ENCODE measurements at regions of chr11 and their contacts with region 1.

Region 1: DNA sequence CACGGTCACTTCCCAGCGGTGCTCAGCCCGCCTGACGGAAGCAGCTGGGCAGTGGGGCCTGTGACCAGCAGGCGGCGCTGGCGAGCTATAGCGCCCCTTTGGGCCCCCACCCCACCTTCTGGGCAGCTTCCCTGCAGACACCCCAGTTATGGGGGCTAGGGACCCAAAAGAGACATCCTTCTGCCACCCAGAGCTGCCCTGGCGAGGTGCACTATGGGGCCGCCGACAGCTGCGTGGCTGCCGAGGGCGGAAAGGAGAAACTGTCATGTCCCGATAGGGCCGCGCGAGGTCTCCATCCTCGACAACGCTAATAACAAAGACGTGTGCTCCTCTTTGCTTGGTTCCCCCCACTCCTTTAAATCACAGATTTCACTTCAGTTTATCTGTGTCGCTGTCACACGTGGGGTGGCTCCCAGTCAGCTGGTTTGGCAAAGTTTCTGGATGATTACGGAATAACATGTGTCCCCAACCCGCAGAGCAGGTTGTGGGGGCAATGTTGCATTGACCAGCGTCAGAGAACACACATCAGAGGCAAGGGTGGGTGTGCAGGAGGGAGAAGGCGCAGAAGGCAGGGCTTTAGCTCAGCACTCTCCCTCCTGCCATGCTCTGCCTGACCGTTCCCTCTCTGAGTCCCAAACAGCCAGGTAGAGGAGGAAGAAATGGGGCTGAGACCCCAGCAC is 674 bp upstream of the MYO7A start:
- DNase-seq: peak; percentile 74
- ATAC-seq: peak; percentile 83
- H3K4me3 Mint-ChIP-seq: peak overlapping the region; percentile 37
- H3K27ac Mint-ChIP-seq: no peak overlapping the region
- H3K4me1 Mint-ChIP-seq: peaks cover 5% of the 10 kb centered on the region
- H3K27me3 Mint-ChIP-seq: peaks cover 4% of the 10 kb centered on the region
- CTCF ChIP-seq: peak; percentile 100

Region 2: DNA sequence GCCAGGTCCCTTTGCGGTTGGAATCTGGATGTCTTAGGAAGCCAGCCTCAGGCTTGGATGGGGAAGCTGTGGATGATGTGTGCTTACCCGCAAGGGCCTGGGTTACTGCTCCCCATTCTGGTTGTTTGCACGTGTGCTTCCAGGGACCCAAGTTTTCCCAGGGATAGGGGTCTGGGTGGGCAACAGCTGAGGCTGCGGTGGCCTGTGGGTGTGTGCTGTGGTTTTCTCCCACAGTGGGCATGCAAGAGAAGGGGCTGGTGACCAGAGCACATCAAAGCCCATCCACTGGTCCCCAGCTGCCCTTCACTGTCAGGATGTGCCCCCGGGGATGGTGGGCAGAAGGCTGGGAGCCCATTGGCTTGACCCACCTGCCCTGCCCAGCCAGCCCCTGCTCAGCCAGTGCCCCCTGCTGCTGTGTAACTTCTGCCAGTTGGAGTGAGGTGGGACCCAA is 57.3 kb before region 1 on chr11:
- CTCF ChIA-PET with region 1: no interaction called
- POLR2A ChIA-PET with region 1: no interaction called
- intact Hi-C with region 1: no loop called
- DNase-seq: no peak
- ATAC-seq: no peak
- H3K4me3 Mint-ChIP-seq: no peak overlapping the region
- H3K27ac Mint-ChIP-seq: no peak overlapping the region
- H3K4me1 Mint-ChIP-seq: peaks cover 36% of the 10 kb centered on the region
- H3K27me3 Mint-ChIP-seq: no peaks in the 10 kb centered on the region
- CTCF ChIP-seq: no peak

Region 3: GRCh38 chr11:77113382-77114088 is 13.8 kb before region 1 on chr11:
- CTCF ChIA-PET with region 1: interaction called, 13 read pairs
- POLR2A ChIA-PET with region 1: no interaction called
- intact Hi-C with region 1: no loop called
- DNase-seq: peak; percentile 52
- ATAC-seq: peak; percentile 37
- H3K4me3 Mint-ChIP-seq: no peak overlapping the region
- H3K27ac Mint-ChIP-seq: no peak overlapping the region
- H3K4me1 Mint-ChIP-seq: no peaks in the 10 kb centered on the region
- H3K27me3 Mint-ChIP-seq: no peaks in the 10 kb centered on the region
- CTCF ChIP-seq: peak; percentile 25

Region 4: DNA sequence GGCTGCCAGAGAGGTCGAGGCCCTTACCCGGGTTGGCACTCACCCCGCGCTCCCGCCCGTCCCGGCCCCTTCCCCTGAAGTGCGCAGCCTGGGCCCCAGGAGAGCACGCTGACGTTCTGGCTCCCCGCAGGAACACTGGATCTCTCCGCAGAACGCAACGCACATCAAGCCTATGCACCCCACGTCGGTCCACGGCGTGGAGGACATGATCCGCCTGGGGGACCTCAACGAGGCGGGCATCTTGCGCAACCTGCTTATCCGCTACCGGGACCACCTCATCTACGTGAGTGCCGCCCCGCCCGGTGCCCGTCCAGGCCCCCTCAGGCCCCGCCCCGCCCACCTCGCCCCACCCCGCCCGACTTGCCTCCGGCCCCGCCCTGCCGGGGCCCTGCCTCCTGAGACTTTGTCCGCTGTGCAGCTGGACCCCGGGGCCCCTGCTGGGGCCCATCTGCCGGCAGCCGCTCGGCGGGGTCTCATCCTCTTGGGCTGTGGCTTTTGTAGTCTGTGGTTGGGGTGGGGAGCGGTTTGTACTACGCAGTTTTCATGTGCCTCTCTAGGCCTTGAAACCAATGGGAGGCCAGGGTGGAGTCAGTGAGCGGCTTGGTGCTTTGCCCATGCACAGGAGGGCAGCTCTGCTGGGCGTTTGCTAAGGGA is 20.4 kb after region 1 on chr11:
- CTCF ChIA-PET with region 1: interaction called, 27 read pairs
- POLR2A ChIA-PET with region 1: no interaction called
- intact Hi-C with region 1: no loop called
- DNase-seq: peak; percentile 74
- ATAC-seq: peak; percentile 50
- H3K4me3 Mint-ChIP-seq: peak overlapping the region; percentile 43
- H3K27ac Mint-ChIP-seq: peak overlapping the region; percentile 60
- H3K4me1 Mint-ChIP-seq: peaks cover 39% of the 10 kb centered on the region
- H3K27me3 Mint-ChIP-seq: no peaks in the 10 kb centered on the region
- CTCF ChIP-seq: no peak

Region 5: GRCh38 chr11:77179048-77179447 is 51.7 kb after region 1 on chr11:
- CTCF ChIA-PET with region 1: interaction called, 176 read pairs
- POLR2A ChIA-PET with region 1: no interaction called
- intact Hi-C with region 1: no loop called
- DNase-seq: no peak
- ATAC-seq: no peak
- H3K4me3 Mint-ChIP-seq: no peak overlapping the region
- H3K27ac Mint-ChIP-seq: no peak overlapping the region
- H3K4me1 Mint-ChIP-seq: no peaks in the 10 kb centered on the region
- H3K27me3 Mint-ChIP-seq: no peaks in the 10 kb centered on the region
- CTCF ChIP-seq: no peak

Region 6: DNA sequence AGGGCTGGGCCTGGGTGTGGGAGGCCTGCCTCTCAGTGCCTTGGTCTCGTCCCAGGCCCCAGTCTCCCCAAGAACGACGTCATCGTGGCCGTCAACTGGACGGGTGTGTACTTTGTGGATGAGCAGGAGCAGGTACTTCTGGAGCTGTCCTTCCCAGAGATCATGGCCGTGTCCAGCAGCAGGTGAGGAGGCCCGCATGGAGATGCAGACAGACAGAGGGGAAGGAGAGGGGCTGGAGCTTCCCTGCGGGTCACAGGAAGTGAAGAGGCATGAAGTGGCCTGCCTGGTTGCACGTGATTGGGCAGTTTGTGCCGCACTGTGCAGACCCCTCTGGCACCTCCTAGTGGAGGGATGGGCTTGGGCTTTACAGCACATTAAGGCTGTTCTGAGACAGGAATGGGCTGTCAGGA is 71.1 kb after region 1 on chr11:
- CTCF ChIA-PET with region 1: interaction called, 13 read pairs
- POLR2A ChIA-PET with region 1: no interaction called
- intact Hi-C with region 1: no loop called
- DNase-seq: peak; percentile 64
- ATAC-seq: peak; percentile 77
- H3K4me3 Mint-ChIP-seq: no peak overlapping the region
- H3K27ac Mint-ChIP-seq: no peak overlapping the region
- H3K4me1 Mint-ChIP-seq: no peaks in the 10 kb centered on the region
- H3K27me3 Mint-ChIP-seq: no peaks in the 10 kb centered on the region
- CTCF ChIP-seq: no peak

Region 7: GRCh38 chr11:77299528-77299993 is 172.2 kb after region 1 on chr11:
- CTCF ChIA-PET with region 1: no interaction called
- POLR2A ChIA-PET with region 1: no interaction called
- intact Hi-C with region 1: no loop called
- DNase-seq: no peak
- ATAC-seq: no peak
- H3K4me3 Mint-ChIP-seq: no peak overlapping the region
- H3K27ac Mint-ChIP-seq: no peak overlapping the region
- H3K4me1 Mint-ChIP-seq: no peaks in the 10 kb centered on the region
- H3K27me3 Mint-ChIP-seq: no peaks in the 10 kb centered on the region
- CTCF ChIP-seq: no peak

Region 8: GRCh38 chr11:77557554-77557953 is 430.2 kb after region 1 on chr11:
- CTCF ChIA-PET with region 1: no interaction called
- POLR2A ChIA-PET with region 1: no interaction called
- intact Hi-C with region 1: loop called (anchors 10 kb)
- DNase-seq: peak; percentile 10
- ATAC-seq: no peak
- H3K4me3 Mint-ChIP-seq: no peak overlapping the region
- H3K27ac Mint-ChIP-seq: no peak overlapping the region
- H3K4me1 Mint-ChIP-seq: no peaks in the 10 kb centered on the region
- H3K27me3 Mint-ChIP-seq: no peaks in the 10 kb centered on the region
- CTCF ChIP-seq: no peak